ENCODE measurements at regions of chr10 and their contacts with region 1.

Region 1: GRCh38 chr10:123906884-123907652 is 15.5 kb upstream of the CPXM2 start:
- DNase-seq: no peak
- H3K4me3 ChIP-seq: no peak overlapping the region
- CTCF ChIP-seq: no peak

Region 2: DNA sequence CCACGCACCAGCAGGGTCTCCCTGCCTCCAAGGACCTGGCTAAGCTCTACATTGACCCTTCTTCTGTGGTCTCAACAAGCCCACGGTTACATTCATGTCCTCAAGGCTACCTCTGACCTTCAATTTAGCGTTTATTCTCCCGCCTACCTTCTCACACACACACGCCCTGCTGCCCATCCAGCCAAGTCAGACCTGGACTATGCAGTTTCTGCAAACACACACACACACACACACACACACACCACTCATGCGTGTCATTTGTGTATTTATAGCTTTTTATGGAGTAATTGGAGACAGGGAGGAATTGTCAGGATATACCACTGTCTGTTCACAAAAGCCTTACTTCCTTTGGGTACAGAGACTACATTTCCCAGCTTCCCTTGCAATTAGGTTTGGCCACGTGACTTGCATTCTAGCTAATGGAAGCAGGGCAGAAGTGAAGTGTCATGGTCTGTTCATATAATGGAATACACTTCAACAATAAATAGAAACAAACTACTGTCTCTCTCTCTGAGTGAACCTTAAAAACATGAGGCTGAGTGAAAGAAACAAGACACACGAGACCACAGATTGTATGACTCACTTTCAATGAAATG is 38.4 kb after region 1 on chr10:
- in situ Hi-C with region 1: loop called (anchors 5 kb)
- DNase-seq: no peak
- H3K4me3 ChIP-seq: no peak overlapping the region
- CTCF ChIP-seq: no peak

Region 3: DNA sequence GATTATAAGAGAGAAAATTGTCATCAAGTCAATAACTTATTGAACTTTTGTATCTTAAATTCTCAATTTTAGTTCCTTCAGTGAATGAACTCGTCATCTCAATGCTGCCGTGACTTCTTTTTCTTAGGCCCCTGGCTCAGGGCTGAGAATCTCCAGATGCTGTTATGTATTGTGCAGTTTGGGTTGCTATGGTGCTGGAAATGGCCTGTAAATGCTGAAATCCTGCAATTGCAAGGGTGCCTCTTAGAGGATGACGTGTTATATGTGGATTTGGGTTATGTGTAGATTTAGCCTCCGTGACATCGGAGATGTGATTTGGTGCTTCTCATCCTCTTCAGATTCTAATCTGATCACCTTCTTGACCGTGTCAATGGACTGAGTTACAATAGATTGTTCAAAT is 979.1 kb after region 1 on chr10:
- in situ Hi-C with region 1: no loop called
- DNase-seq: no peak
- H3K4me3 ChIP-seq: no peak overlapping the region
- CTCF ChIP-seq: no peak

Measured in astrocyte of the cerebellum (primary cell).